K562 (cell line): ENCODE measurements at regions of chr1 and their contacts with region 1.

Region 1: GRCh38 chr1:246280551-246280950 is 226.5 kb downstream of the SMYD3 start:
- DNase-seq: peak in 1 of 4 experiments; percentile 58
- ATAC-seq: peak; percentile 86
- H3K4me3 ChIP-seq: no peak overlapping the region
- H3K27ac ChIP-seq: no peak overlapping the region
- H3K4me1 ChIP-seq: no peaks in the 10 kb centered on the region; a peak in 3 of 5 replicates
- H3K27me3 ChIP-seq: no peaks in the 10 kb centered on the region
- CTCF ChIP-seq: peak; percentile 36 to 75 (median 59); a peak in 5 of 6 replicates
- EP300 ChIP-seq: no peak
- POLR2A ChIP-seq: no peak
- RAD21 ChIP-seq: peak; percentile 93 to 96

Region 2: DNA sequence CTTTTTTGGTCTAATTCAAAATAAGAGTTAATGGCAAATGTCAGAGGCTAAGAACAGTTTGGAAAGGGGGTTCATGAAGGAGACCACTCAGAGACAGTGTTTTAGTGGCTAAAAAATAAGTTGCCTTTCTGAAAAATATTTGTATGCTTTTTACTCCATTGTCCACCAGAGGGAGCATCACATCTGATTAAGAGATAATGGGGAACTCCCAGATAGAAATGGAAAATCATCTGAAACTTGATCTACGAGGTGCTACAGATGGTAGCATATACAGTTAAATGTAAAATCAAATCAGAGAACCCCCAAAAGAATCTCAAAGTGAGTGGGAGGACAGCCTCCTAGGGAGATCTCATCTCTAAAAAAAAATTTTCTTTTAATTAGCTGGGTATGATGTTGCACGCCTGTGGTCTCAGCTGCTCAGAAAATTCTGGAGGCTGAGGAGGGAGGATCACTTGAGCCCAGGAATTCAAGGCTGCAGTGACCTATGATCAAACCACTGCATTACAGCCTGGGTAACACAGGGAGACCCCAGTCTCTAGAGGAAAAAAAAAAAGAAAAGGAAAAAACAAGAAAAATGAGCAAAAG is 216.9 kb after region 1 on chr1:
- CTCF ChIA-PET with region 1: no interaction called
- POLR2A ChIA-PET with region 1: no interaction called
- in situ Hi-C with region 1: no loop called
- intact Hi-C with region 1: loop called (anchors 5 kb)
- DNase-seq: peak; percentile 62 to 84 (median 67)
- ATAC-seq: peak; percentile 45
- H3K4me3 ChIP-seq: no peak overlapping the region
- H3K27ac ChIP-seq: no peak overlapping the region
- H3K4me1 ChIP-seq: peaks cover 0 to 2% of the 10 kb centered on the region in 2 experiments; a peak in 2 of 5 replicates
- H3K27me3 ChIP-seq: no peaks in the 10 kb centered on the region
- CTCF ChIP-seq: peak; percentile 70 to 91 (median 71); a peak in 5 of 6 replicates
- EP300 ChIP-seq: no peak; the same call in 1 of the 2 replicates
- POLR2A ChIP-seq: no peak
- RAD21 ChIP-seq: peak; percentile 84 to 92